Lower leg skin (tissue), 4 donors: ENCODE measurements at regions of chr11 and their contacts with region 1.

Region 1: GRCh38 chr11:11454731-11455140 is 101.7 kb upstream of the CSNK2A3 start:
- DNase-seq: no peak
- H3K4me3 ChIP-seq: no peak overlapping the region
- CTCF ChIP-seq: no peak
- POLR2A ChIP-seq: no peak

Region 2: DNA sequence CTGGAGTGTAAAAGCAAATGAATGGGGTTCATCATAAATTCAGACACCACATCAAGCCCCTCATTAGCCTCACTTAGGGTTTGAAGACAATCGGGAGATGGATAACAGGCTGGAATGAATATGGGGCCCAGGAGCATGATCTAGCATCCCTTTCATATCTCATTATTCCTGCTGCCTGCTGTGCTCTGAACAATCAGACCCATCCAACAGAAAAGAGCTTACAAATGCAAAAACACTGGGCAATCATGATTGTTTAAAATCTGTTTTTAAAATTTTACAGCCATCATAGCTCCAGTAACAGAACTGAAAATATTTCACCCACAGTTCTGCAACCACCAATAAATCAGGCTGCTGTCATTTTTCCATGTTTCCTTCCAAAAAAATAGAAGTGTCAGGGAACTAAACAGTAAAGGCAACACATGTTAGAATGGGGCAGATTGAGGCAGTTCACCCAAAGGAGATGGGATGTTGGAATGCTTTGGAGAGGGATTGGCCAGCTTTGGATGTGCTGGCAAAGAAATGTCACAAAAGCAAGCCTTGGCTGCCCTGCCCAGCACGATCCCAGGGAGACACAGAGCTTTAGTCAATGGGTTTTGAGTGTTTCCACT is 1775.1 kb after region 1 on chr11:
- intact Hi-C with region 1: loop called (anchors 5 kb)
- DNase-seq: no peak
- H3K4me3 ChIP-seq: no peak overlapping the region
- CTCF ChIP-seq: no peak
- POLR2A ChIP-seq: no peak